Aorta (tissue), 5 donors: ENCODE measurements at regions of chr6 and their contacts with region 1.

Region 1: GRCh38 chr6:142926494-142927270 is 18.3 kb downstream of the HIVEP2 start:
- DNase-seq: peak; percentile 89 to 91
- ATAC-seq: peak; percentile 91
- H3K4me3 ChIP-seq: peak overlapping the region; percentile 15 to 36
- H3K27ac ChIP-seq: peak overlapping the region; percentile 11 to 59
- H3K4me1 ChIP-seq: no peaks in the 10 kb centered on the region
- H3K27me3 ChIP-seq: no peaks in the 10 kb centered on the region

Region 2: DNA sequence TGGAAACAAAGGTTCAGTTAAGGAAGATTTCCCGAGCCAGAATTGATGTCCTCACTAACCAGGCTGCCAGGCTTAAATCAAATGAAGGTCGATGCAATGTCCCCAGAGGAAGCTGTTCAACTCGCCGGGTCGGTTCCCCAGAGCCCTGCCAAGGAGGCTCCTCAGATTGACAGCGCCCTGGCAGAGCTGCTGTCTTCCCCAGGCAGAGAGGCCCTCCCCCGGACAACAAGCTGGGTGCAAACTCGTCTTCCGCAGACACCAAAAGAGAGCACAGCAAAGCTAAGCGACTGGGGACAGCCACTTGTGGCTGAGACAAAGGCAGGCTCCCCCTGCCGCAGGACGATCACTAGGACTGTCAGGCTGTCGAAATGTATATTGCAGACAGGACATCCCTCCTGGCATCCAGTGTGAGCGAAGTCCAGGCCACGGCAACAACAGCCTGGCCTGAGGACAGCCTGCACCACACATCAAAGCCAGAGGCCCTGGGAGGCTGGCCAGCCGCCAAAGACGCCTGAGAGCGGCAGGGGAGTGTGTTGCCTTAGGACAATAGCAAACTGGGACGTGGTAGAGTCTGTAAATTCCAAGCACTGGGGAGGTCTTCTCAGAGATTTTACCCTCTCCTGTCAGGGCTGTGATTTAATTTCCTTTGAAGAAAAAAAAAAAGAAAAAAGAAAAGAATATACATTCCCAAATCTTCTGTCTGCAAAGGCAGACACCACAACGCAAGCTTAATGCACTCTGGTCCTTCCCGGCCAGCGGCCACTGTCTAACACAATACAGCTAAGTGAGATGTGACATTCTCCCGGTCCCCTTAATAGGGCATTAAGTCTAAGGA is 80.8 kb before region 1 on chr6:
- intact Hi-C with region 1: loop called in 1 of 2 experiments (anchors 5 kb)
- DNase-seq: peak; percentile 83 to 92
- ATAC-seq: peak; percentile 81
- H3K4me3 ChIP-seq: no peak overlapping the region
- H3K27ac ChIP-seq: peak overlapping the region in 1 of 2 donors; percentile 42
- H3K4me1 ChIP-seq: peaks cover 7 to 9% of the 10 kb centered on the region in 2 donors
- H3K27me3 ChIP-seq: no peaks in the 10 kb centered on the region

Region 3: DNA sequence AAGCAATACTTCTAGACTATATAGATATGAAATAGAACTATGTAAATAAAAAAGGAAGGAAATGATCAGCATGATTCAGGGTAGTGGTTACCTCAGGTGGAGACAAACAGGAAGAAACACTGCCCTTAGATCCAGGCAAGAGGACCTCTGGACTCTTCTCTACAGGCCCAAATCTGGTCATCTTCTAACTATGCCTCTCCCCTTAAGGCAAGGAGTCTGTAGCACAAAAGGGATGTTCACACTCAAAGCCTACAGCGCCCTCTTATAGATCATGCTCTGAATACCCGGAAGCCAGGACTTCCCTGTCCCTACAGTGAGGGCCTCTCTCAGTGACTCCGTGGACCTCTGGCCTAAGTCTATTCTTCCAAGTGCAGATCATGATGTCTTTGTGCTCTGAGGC is 48.7 kb after region 1 on chr6:
- intact Hi-C with region 1: no loop called
- DNase-seq: no peak
- ATAC-seq: peak; percentile 11
- H3K4me3 ChIP-seq: no peak overlapping the region
- H3K27ac ChIP-seq: no peak overlapping the region
- H3K4me1 ChIP-seq: no peaks in the 10 kb centered on the region
- H3K27me3 ChIP-seq: no peaks in the 10 kb centered on the region